GM10248 (cell line): ENCODE measurements at regions of chr6 and their contacts with region 1.

Region 1: GRCh38 chr6:993923-994322 is 301.0 kb upstream of the EXOC2 start:
- DNase-seq: no peak
- CTCF ChIP-seq: no peak

Region 2: DNA sequence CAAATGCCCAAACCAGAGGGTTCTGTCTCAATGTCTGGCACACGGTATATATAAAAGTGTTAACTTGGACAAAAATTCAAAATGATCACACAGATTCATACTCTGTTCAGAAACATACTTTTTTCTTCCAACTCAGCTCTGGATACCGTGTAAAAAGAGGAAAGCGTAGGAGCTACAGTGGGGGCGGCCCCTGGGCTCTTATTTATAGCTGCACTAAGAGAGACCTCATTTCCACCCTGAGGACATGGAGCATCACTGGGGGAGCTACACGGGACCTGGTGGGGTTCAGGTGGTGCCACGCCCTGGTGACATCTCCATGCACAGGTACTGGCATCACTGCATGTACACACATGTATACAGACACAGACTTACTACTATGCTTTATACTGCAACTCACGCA is 132.1 kb after region 1 on chr6:
- CTCF ChIA-PET with region 1: no interaction called
- POLR2A ChIA-PET with region 1: interaction called, 11 read pairs
- DNase-seq: no peak
- CTCF ChIP-seq: no peak

Region 3: GRCh38 chr6:1170794-1171193 is 176.9 kb after region 1 on chr6:
- CTCF ChIA-PET with region 1: no interaction called
- POLR2A ChIA-PET with region 1: no interaction called
- DNase-seq: no peak
- CTCF ChIP-seq: no peak